ENCODE measurements at regions of chr3 and their contacts with region 1.

Region 1: DNA sequence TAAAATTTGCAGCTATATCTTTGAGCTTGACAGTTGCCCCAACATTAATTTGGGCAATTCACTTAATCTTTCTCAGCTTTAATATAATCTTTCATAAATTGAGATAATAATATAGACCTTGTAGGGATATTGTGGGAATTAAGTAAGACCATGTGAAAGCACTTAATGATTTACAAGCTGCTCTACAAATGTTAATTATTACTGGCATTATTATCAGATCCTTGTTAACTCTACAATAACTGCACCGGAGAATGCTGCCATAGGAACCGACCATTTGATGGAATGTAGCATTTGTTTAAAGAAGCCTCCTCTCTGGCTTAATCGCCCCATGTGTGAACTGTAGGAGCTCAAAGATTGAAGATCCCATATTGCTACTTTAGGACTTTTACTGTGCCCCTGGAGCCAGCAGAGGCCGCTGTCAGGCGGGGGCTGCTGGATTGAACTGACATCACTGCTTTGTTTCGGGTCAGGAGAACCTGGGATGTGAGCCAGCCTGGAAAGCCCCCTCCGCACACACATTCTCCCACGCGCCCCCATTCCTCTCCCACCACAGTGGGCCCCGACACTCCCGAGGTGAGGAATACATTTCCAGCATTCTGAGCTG is 154.2 kb upstream of the TNIK start:
- DNase-seq: peak; percentile 37
- H3K4me3 ChIP-seq: no peak overlapping the region
- H3K27ac ChIP-seq: no peak overlapping the region
- H3K4me1 ChIP-seq: no peaks in the 10 kb centered on the region
- H3K27me3 ChIP-seq: no peaks in the 10 kb centered on the region
- CTCF ChIP-seq: peak; percentile 35 to 55
- POLR2A ChIP-seq: no peak

Region 2: DNA sequence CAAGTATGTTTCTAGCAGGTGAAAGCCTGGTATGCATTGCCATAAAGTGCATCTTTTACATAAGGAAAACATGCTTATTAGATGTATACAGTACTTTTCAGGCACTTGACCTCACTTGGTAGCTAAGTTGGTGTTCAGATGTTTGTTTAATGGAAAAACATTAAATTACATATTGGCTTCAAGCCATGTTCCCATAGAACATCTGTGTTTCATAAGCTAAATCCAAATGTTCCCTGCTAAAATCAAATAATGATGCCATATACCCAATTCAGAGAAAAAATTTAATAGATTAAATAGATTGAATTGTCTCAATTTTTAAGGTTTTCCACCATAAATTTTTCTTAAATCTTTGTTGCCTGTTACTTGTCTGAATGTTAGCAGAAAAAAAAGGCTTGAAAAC is 725.3 kb before region 1 on chr3:
- CTCF ChIA-PET with region 1: no interaction called
- POLR2A ChIA-PET with region 1: no interaction called
- dilution Hi-C with region 1: no loop called
- intact Hi-C with region 1: no loop called
- DNase-seq: no peak
- H3K4me3 ChIP-seq: no peak overlapping the region
- H3K27ac ChIP-seq: no peak overlapping the region
- H3K4me1 ChIP-seq: no peaks in the 10 kb centered on the region
- H3K27me3 ChIP-seq: no peaks in the 10 kb centered on the region
- CTCF ChIP-seq: no peak
- POLR2A ChIP-seq: no peak

Region 3: GRCh38 chr3:171602072-171602471 is 12.3 kb before region 1 on chr3:
- CTCF ChIA-PET with region 1: interaction called, 10 read pairs
- POLR2A ChIA-PET with region 1: no interaction called
- dilution Hi-C with region 1: no loop called
- intact Hi-C with region 1: no loop called
- DNase-seq: no peak
- H3K4me3 ChIP-seq: no peak overlapping the region
- H3K27ac ChIP-seq: no peak overlapping the region
- H3K4me1 ChIP-seq: no peaks in the 10 kb centered on the region
- H3K27me3 ChIP-seq: no peaks in the 10 kb centered on the region
- CTCF ChIP-seq: no peak
- POLR2A ChIP-seq: no peak

Measured in endothelial cell of umbilical vein (primary cell).